Gastrocnemius medialis (tissue), 4 donors: ENCODE measurements at regions of chr16 and their contacts with region 1.

Region 1: GRCh38 chr16:74438492-74439041 is 17.3 kb upstream of the CLEC18B start:
- DNase-seq: no peak
- ATAC-seq: no peak
- H3K4me3 ChIP-seq: no peak overlapping the region
- H3K27ac ChIP-seq: no peak overlapping the region
- H3K4me1 ChIP-seq: no peaks in the 10 kb centered on the region
- H3K27me3 ChIP-seq: no peaks in the 10 kb centered on the region
- CTCF ChIP-seq: no peak
- POLR2A ChIP-seq: no peak

Region 2: DNA sequence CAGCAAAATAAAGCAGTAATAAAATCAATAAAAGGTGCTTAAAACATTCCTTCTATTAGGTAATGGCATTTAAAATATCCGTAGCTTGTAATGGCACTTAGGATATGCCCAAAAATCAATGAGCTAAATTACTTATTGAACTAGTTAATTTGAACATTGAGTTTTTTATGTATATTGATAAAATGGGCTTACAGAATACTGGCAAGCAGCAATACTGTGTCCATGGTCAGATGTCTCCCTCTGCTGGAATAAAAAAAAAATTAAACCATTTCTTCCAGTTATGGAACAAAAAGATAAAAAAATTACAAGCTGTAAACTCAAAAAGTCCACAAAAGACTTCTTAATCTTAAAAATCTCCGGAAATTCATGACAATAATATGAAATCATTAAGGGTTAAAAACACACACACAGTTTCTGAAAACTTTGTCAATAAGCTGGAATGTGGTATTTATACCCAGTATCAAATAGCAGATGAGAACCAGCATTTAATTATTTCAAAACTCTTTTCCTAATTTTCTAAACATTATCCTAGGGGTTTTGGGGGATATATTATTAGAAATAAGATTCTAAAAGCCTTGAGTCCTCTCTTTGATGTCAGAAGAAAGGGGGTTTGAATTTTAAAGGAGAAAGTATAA is 163.4 kb before region 1 on chr16:
- in situ Hi-C with region 1: no loop called
- intact Hi-C with region 1: no loop called
- DNase-seq: no peak
- ATAC-seq: no peak
- H3K4me3 ChIP-seq: no peak overlapping the region
- H3K27ac ChIP-seq: no peak overlapping the region
- H3K4me1 ChIP-seq: no peaks in the 10 kb centered on the region
- H3K27me3 ChIP-seq: no peaks in the 10 kb centered on the region
- CTCF ChIP-seq: peak in 1 of 5 experiments; percentile 32
- POLR2A ChIP-seq: no peak

Region 3: DNA sequence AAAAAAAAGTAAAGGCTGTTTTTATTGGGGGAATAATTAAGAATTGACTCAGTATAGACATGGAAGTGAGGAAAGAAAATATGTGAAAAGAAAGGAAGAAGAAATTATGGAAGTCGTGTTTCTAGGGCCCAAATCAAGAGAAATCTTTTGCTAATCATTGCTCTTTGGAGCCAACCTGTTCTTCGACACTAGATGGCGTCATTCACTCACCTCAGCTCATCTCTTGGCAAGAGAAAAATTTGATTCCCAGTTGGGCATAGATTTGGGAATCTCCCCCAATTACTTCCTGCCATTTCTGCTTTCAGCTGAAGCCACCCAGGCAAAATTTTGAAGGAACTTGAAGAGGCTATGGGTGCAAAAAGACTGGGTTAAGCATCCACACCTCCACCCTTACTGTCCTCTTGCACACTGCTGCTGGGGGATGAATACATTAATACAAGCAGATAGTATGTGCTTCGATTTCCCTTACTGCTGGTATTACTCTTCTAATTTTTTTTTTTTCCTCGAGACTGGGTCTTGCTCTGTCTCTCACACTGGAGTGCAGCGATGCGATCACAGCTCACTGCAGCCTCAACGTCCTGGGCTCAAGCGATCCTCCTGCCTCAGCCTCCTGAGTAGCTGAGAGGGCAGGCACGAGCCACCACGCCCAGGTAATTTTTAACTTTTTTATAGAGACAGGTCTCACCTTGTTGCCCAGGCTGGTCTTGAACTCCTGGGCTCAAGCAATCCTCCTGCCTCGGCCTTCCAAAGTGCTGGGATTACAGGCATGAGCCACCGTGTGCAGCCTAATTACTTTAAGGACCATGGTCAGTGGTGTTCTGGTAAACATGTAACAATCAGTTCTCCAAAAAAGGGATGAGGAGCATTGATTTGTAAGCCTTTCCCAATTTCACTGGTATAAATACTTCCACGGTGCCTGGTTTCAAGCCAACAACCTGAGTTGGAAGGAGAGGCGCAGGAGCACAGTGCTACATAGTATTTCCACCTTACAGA is 128.5 kb before region 1 on chr16:
- in situ Hi-C with region 1: no loop called
- intact Hi-C with region 1: loop called (anchors 10 kb)
- DNase-seq: no peak
- ATAC-seq: no peak
- H3K4me3 ChIP-seq: no peak overlapping the region
- H3K27ac ChIP-seq: no peak overlapping the region
- H3K4me1 ChIP-seq: no peaks in the 10 kb centered on the region
- H3K27me3 ChIP-seq: no peaks in the 10 kb centered on the region
- CTCF ChIP-seq: peak in 4 of 5 experiments; percentile 17 to 67 (median 58)
- POLR2A ChIP-seq: no peak

Region 4: GRCh38 chr16:74760007-74760767 is 321.6 kb after region 1 on chr16:
- in situ Hi-C with region 1: no loop called
- intact Hi-C with region 1: no loop called
- DNase-seq: no peak
- ATAC-seq: no peak
- H3K4me3 ChIP-seq: no peak overlapping the region
- H3K27ac ChIP-seq: no peak overlapping the region
- H3K4me1 ChIP-seq: no peaks in the 10 kb centered on the region
- H3K27me3 ChIP-seq: peaks cover 4 to 12% (median 8%) of the 10 kb centered on the region in 3 donors
- CTCF ChIP-seq: no peak
- POLR2A ChIP-seq: no peak